ENCODE measurements at regions of chr13 and their contacts with region 1.

Region 1: GRCh38 chr13:107650081-107650701 is 565.1 kb downstream of the LIG4 start:
- DNase-seq: peak; percentile 42
- H3K4me3 Mint-ChIP-seq: no peak overlapping the region
- H3K27ac Mint-ChIP-seq: no peak overlapping the region
- H3K4me1 Mint-ChIP-seq: no peaks in the 10 kb centered on the region
- H3K27me3 Mint-ChIP-seq: no peaks in the 10 kb centered on the region
- CTCF ChIP-seq: peak; percentile 49

Region 2: GRCh38 chr13:107211073-107211472 is 439.1 kb before region 1 on chr13:
- CTCF ChIA-PET with region 1: no interaction called
- intact Hi-C with region 1: loop called (anchors 2 kb)
- DNase-seq: peak; percentile 50
- H3K4me3 Mint-ChIP-seq: no peak overlapping the region
- H3K27ac Mint-ChIP-seq: no peak overlapping the region
- H3K4me1 Mint-ChIP-seq: no peaks in the 10 kb centered on the region
- H3K27me3 Mint-ChIP-seq: no peaks in the 10 kb centered on the region
- CTCF ChIP-seq: peak; percentile 24

Region 3: DNA sequence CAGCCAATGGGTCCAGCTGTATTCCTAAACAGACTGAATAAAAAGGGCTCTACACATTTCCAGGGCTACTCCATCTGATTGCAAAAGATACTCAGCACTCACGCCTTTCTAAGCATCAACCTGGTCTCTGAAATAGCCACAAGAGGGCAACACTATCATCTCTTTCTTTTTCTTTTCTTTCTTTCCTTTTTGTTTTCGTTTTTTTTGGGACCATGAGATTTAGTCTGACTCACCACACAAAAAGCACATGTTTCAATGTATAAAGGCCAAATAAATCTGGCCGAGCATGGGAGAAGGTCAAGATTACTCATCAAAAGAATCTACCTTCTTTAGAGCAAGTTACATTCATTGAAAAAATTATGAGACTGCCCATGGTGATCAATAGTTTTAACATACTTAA is 276.6 kb before region 1 on chr13:
- CTCF ChIA-PET with region 1: no interaction called
- intact Hi-C with region 1: loop called (anchors 2 kb)
- DNase-seq: no peak
- H3K4me3 Mint-ChIP-seq: no peak overlapping the region
- H3K27ac Mint-ChIP-seq: no peak overlapping the region
- H3K4me1 Mint-ChIP-seq: no peaks in the 10 kb centered on the region
- H3K27me3 Mint-ChIP-seq: no peaks in the 10 kb centered on the region
- CTCF ChIP-seq: no peak

Region 4: GRCh38 chr13:107753291-107753690 is 103.1 kb after region 1 on chr13:
- CTCF ChIA-PET with region 1: no interaction called
- intact Hi-C with region 1: no loop called
- DNase-seq: no peak
- H3K4me3 Mint-ChIP-seq: no peak overlapping the region
- H3K27ac Mint-ChIP-seq: no peak overlapping the region
- H3K4me1 Mint-ChIP-seq: no peaks in the 10 kb centered on the region
- H3K27me3 Mint-ChIP-seq: no peaks in the 10 kb centered on the region
- CTCF ChIP-seq: no peak

Region 5: DNA sequence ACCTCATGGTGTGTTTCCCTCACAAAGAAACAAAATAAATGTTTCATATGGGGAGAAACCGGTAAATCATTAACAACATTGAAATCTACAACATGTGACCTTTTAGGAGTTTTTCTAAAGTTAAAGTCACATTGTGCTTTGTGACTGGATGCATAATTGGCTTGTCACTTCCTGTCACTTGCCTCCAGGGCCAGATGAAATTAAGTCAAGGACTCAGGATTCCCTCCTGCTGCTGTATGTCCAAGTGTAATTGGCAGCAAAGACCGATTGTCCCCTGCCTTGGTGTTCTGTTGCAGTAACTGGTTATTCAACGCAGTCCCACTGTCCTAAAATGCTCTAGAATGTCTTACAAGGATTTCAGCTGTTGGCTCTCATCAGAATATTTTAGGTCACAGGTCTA is 116.9 kb after region 1 on chr13:
- CTCF ChIA-PET with region 1: no interaction called
- intact Hi-C with region 1: no loop called
- DNase-seq: no peak
- H3K4me3 Mint-ChIP-seq: no peak overlapping the region
- H3K27ac Mint-ChIP-seq: peak overlapping the region; percentile 46
- H3K4me1 Mint-ChIP-seq: no peaks in the 10 kb centered on the region
- H3K27me3 Mint-ChIP-seq: no peaks in the 10 kb centered on the region
- CTCF ChIP-seq: no peak